ENCODE measurements at regions of chr11 and their contacts with region 1.

Region 1: DNA sequence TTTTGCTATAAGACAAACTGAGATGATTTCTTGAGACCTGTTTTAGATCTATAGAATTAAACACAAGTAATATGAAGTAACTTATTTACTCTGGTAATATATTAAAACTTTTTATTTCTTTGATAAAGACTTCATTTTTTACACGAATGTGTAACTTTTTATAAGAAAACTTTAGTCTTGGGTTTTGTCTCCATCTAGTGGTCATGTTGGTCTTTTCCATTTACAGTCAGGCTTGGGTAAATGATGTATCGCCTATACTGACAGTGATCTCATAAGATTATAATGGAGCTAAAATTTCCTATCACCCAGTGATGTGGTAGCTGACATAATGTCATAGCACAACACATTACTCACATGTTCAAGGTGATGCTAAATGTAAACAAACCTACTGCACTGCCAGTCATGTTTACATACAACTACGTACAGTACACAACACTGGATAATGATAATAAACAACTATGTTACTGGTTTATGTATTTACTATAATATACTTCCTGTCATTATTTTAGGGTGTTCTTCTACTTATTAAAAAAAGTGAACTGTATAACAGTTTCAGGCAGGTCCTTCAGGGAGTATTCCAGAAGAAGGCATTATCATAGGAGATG is 7.5 kb upstream of the C11orf97 start:
- DNase-seq: no peak
- H3K4me3 ChIP-seq: no peak overlapping the region
- CTCF ChIP-seq: peak; percentile 26

Region 2: GRCh38 chr11:93887111-93887510 is 617.7 kb before region 1 on chr11:
- CTCF ChIA-PET with region 1: interaction called, 13 read pairs
- POLR2A ChIA-PET with region 1: no interaction called
- DNase-seq: no peak
- H3K4me3 ChIP-seq: no peak overlapping the region
- CTCF ChIP-seq: no peak

Region 3: DNA sequence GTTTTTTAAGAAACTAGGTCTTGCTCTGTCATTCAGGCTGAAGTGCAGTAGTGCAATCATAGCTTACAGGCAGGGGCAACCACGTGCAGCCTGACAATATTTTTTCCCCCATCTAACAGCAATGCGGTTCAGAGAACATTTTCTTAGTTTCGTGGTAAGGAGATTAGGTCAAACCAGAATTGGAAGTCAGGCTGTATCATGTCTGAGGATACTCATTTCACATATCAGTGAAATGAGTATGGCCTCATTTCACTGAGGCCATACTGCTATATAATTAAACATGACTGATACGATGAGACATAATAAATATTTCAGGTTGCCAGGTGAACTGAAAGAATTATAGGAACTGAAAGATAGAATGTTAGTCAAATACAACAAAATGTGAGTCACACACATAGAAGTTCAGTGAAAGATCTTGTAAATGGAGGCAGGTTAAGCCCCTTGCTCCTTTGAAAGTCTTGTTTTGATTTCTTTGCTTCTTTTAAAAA is 232.9 kb before region 1 on chr11:
- CTCF ChIA-PET with region 1: no interaction called
- POLR2A ChIA-PET with region 1: no interaction called
- DNase-seq: no peak
- H3K4me3 ChIP-seq: no peak overlapping the region
- CTCF ChIP-seq: no peak

Region 4: GRCh38 chr11:94376841-94377240 is 128.0 kb before region 1 on chr11:
- CTCF ChIA-PET with region 1: no interaction called
- POLR2A ChIA-PET with region 1: no interaction called
- DNase-seq: no peak
- H3K4me3 ChIP-seq: no peak overlapping the region
- CTCF ChIP-seq: no peak